T-cell (primary cell): ENCODE measurements at regions of chr12 and their contacts with region 1.

Region 1: DNA sequence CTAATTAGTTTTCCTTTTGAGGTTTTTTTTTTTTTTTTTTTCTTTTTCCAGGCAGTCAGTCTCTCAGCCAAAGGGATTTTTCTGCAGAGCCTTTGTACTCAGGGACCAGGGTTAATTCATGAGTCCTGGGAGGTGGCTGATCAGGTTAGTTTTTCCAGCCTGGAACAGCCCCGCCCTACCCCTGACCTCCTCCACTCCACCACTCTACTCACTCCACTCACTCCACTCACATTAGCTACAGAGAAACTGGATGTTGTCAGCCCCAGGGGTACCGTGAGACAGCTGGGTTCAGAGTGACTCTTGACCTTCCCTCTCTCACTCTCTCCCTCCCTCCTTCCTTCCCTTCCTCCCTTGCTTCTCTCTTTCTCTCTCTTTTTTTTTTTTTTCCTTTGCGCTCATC is 161.0 kb downstream of the CRADD start:
- DNase-seq: no peak
- ATAC-seq: no peak
- H3K4me3 ChIP-seq: no peak overlapping the region
- H3K4me3 Mint-ChIP-seq: no peak overlapping the region
- H3K27ac ChIP-seq: no peak overlapping the region
- H3K27ac Mint-ChIP-seq: no peak overlapping the region
- H3K4me1 ChIP-seq: no peaks in the 10 kb centered on the region
- H3K4me1 Mint-ChIP-seq: peaks cover 0 to 11% (median 0%) of the 10 kb centered on the region in 3 donors
- H3K27me3 ChIP-seq: no peaks in the 10 kb centered on the region
- H3K27me3 Mint-ChIP-seq: no peaks in the 10 kb centered on the region

Region 2: DNA sequence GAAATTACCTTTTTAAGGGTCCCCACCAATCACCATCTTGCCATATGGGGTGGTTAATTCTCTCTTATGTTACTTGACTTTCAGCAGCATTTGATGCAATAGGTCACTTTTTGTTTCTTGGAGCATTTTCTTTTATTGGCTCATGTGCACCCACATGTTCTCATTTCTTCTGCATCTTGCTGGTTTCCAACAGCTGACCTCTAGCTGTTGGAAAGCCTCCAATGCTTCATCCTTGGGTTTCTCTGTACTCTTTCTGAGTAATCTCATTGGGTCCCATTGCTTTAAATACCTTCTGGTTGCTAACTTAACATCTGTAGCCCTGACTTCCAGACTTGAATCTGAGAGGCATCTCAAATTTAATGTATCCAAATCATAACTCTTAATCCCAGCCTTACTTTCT is 44.2 kb before region 1 on chr12:
- CTCF ChIA-PET with region 1: no interaction called
- POLR2A ChIA-PET with region 1: no interaction called
- DNase-seq: no peak
- ATAC-seq: no peak
- H3K4me3 ChIP-seq: no peak overlapping the region
- H3K4me3 Mint-ChIP-seq: no peak overlapping the region
- H3K27ac ChIP-seq: no peak overlapping the region
- H3K27ac Mint-ChIP-seq: no peak overlapping the region
- H3K4me1 ChIP-seq: peaks cover 0 to 14% of the 10 kb centered on the region in 2 experiments
- H3K4me1 Mint-ChIP-seq: peaks cover 14 to 21% (median 18%) of the 10 kb centered on the region in 3 donors
- H3K27me3 ChIP-seq: no peaks in the 10 kb centered on the region
- H3K27me3 Mint-ChIP-seq: no peaks in the 10 kb centered on the region

Region 3: GRCh38 chr12:93819050-93819491 is 19.1 kb before region 1 on chr12:
- CTCF ChIA-PET with region 1: no interaction called
- POLR2A ChIA-PET with region 1: interaction called in 1 of 2 experiments, 11 read pairs
- DNase-seq: no peak
- ATAC-seq: no peak
- H3K4me3 ChIP-seq: no peak overlapping the region
- H3K4me3 Mint-ChIP-seq: no peak overlapping the region
- H3K27ac ChIP-seq: no peak overlapping the region
- H3K27ac Mint-ChIP-seq: no peak overlapping the region
- H3K4me1 ChIP-seq: no peaks in the 10 kb centered on the region
- H3K4me1 Mint-ChIP-seq: no peaks in the 10 kb centered on the region
- H3K27me3 ChIP-seq: no peaks in the 10 kb centered on the region
- H3K27me3 Mint-ChIP-seq: no peaks in the 10 kb centered on the region